Mammary epithelial cell (primary cell): ENCODE measurements at regions of chr4 and their contacts with region 1.

Region 1: GRCh38 chr4:151014521-151015458 is at the start of gene LRBA:
- DNase-seq: peak; percentile 89
- H3K4me3 ChIP-seq: peak within 1 kb of the TSS; percentile 74 to 99 (median 77)
- H3K27ac ChIP-seq: peak within 1 kb of the TSS; percentile 92
- H3K4me1 ChIP-seq: peaks cover 15% of the 10 kb centered on the region
- H3K27me3 ChIP-seq: no peaks in the 10 kb centered on the region
- CTCF ChIP-seq: no peak
- total RNA-seq, gene LRBA: 63.3 to 108 TPM

Region 2: DNA sequence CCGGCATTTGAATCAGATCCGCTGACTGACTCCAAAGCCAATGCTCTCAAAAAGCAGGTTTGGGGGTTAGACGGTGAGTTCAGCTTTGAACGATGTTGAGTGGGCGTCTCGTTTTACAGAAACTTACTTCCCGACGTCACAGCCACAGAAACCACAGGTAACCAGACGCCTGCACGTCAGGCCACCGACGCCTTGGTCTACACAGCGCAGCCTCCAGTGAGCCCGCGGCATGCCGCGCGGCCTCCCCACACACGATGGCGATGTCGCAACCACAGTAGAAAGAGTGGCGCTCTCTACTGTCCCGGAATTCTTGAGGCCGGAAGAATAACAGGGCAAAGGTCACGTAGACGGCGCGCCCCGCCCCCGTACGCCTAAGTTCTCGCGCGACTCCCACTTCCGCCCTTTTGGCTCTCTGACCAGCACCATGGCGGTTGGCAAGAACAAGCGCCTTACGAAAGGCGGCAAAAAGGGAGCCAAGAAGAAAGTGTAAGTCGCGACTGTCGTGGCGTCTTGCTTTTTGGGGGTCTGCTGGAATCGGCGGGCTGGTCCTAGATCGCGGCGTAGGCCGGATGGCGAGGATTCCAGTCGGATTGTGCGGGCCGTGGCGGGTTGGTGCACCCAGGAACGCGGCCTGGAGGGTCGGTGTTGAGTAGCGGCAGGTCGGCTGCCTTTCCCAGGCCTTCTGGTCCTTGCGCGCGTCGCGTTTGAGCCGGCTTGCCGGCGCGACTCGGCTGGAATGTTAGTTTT is 84.6 kb after region 1 on chr4 and contains the start of gene RPS3A:
- CTCF ChIA-PET with region 1: no interaction called
- dilution Hi-C with region 1: no loop called
- in situ Hi-C with region 1: no loop called
- intact Hi-C with region 1: loop called (anchors 1 kb)
- DNase-seq: peak; percentile 100
- H3K4me3 ChIP-seq: peak within 1 kb of the TSS; percentile 98 to 100 (median 99)
- H3K27ac ChIP-seq: peak within 1 kb of the TSS; percentile 95
- H3K4me1 ChIP-seq: peaks cover 10% of the 10 kb centered on the region
- H3K27me3 ChIP-seq: no peaks in the 10 kb centered on the region
- CTCF ChIP-seq: peak; percentile 69 to 81
- total RNA-seq, gene RPS3A: 1,437 to 1,463 TPM